Right ventricle myocardium inferior (tissue), 1 donor: ENCODE measurements at regions of chr5 and their contacts with region 1.

Region 1: DNA sequence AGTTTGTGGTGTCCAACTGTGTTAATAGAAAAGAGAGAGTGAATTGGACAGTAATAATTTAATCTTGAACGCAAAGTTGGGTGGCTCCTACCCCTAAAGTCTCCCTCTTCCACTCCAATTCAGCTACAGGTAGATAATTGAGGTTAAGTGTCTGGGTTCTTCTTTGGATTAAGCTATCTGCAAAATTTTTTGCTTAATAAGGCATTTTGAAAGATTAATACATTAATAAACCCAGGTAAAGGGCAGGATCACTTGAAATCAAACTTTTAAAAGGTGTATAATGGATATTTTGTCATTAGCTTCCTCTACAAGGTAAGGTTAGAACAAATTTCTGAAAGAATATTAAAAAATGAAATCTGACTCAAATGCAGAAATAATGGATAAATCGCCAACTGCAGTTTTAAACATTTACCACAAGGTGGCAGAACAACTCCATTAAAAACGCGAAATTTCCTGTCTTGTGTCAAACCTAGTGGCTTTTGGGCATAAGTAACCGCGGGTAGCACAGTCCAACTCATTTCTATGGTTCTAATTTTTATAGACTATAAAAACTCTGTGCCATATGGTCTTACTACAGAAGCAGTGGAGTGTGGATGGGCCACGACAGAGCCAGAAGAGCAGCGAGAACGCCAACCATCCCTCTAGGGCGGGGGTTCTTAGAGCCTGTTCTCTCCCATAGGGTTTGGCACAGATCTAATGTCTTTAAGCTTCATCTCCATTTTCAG is 276.5 kb downstream of the ARHGEF28 start:
- DNase-seq: no peak
- ATAC-seq: peak; percentile 31

Region 2: DNA sequence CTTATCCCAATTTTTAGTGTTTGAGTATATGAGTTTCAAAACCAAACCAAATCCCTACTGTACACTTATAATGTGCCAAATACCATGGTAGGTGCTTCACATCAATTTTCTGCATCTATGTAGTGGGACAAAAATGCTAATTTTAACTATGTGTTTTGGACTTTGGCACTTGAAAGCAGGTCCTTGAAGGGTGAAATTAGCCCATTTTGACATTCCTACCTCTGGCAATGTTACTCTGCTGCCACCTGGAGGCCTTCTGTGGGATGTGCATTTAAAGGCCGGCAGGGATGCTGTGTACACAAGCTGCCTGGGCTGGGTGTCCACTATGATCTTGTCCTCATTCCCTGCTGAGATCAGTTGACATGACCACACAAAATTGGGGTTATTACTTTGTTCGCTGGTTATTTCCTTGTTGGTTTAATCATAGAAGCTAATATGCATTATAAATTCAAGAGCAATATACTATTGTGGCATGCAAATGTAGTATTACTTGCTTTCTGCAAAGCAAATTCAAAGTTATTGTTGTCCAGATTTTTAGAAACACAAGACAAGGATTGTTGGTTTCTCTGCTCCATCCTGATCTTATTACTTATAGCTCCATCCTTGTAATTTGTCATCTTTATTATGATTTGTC is 109.7 kb before region 1 on chr5:
- intact Hi-C with region 1: no loop called
- DNase-seq: no peak
- ATAC-seq: no peak

Region 3: GRCh38 chr5:73859696-73860095 is 42.8 kb before region 1 on chr5:
- intact Hi-C with region 1: loop called (anchors 2 kb)
- DNase-seq: no peak
- ATAC-seq: no peak

Region 4: DNA sequence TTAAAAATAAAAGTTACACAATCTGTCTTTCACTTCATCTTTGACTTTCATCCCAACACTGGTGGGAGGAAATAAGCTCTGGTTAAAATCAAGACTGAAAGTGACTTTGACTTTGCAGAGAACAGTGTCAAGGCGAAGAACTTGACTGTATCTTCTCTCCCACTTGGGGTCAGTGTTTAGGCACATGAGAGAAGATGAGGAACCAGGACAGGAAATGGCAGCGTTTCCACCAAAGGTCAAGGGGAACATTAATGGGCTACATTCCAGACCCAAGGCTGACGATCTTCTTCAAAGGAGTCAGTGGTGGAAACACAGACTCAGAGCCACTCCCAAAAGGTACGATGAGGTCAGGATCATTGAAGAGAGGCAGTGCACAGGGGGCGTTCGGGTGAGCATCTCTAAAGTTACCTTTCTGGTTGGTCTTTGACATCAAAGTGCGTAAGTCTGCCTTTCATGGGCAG is 133.1 kb after region 1 on chr5:
- intact Hi-C with region 1: loop called (anchors 10 kb)
- DNase-seq: no peak
- ATAC-seq: peak; percentile 72

Region 5: DNA sequence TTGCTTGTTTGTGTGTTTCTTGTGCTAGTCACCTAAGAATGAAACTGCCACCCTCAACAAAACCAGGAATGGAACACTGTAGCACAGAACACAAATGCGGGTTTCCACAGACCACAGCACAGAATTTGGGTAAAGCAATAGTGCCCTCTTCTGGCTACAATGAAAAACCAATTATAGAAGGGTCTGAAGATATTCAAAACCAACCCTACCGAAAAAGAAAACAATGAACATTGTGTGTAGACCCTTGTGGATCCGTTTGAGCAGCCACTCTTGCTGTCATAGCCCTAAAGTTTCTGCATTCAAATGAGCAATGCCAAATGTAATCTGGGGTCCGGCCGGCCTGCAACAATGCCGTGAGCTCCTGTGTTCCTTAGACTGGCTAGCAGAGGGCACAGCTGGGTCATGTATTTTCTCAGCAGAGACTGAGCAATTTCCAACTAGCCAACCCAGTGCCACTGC is 746.4 kb after region 1 on chr5:
- intact Hi-C with region 1: loop called (anchors 1 kb)
- DNase-seq: no peak
- ATAC-seq: peak; percentile 91

Region 6: GRCh38 chr5:74919487-74919886 is 1017.0 kb after region 1 on chr5:
- intact Hi-C with region 1: loop called (anchors 10 kb)
- DNase-seq: no peak
- ATAC-seq: no peak

Region 7: GRCh38 chr5:75300084-75300483 is 1397.6 kb after region 1 on chr5:
- intact Hi-C with region 1: no loop called
- DNase-seq: no peak
- ATAC-seq: no peak